ENCODE measurements at regions of chr7 and their contacts with region 1.

Region 1: GRCh38 chr7:134755401-134756022 is 23.9 kb upstream of the CALD1 start:
- DNase-seq: no peak
- ATAC-seq: peak; percentile 47
- H3K4me3 ChIP-seq: no peak overlapping the region
- H3K27ac ChIP-seq: no peak overlapping the region
- H3K4me1 ChIP-seq: no peaks in the 10 kb centered on the region
- H3K27me3 ChIP-seq: no peaks in the 10 kb centered on the region
- CTCF ChIP-seq: peak in 1 of 2 donors; percentile 56

Region 2: DNA sequence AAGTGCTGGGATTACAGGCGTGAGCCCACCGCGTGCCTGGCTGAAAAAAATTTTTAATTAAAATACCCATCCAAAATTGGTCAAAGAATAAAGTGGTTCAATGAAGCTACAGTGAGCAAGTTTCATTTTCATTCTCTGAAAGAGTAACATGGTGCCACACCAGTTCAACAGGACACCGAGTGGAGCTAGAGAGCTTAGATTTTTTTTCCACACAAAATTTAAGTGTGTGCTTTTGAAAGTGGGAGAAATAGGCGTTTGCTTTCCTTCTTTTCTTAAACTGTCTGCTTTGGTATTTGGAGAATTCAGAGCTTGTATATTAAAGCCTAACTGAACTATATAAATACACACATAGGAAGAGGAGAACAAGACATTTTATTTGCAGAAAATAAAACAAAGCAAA is 65.5 kb before region 1 on chr7:
- intact Hi-C with region 1: loop called in 1 of 2 experiments (anchors 5 kb)
- DNase-seq: peak in 2 of 4 donors; percentile 30 to 63
- ATAC-seq: peak; percentile 69
- H3K4me3 ChIP-seq: no peak overlapping the region
- H3K27ac ChIP-seq: peak overlapping the region in 1 of 2 donors; percentile 37
- H3K4me1 ChIP-seq: no peaks in the 10 kb centered on the region
- H3K27me3 ChIP-seq: no peaks in the 10 kb centered on the region
- CTCF ChIP-seq: peak in 1 of 2 donors; percentile 31

Measured in left lung (tissue), 14 donors.